ENCODE measurements at regions of chr3 and their contacts with region 1.

Region 1: GRCh38 chr3:44338010-44338827 is at the start of gene TCAIM:
- DNase-seq: peak; percentile 97
- ATAC-seq: peak; percentile 97 to 99 (median 98)
- H3K4me3 ChIP-seq: peak within 1 kb of the TSS; percentile 49 to 84 (median 70)
- H3K27ac ChIP-seq: peak within 1 kb of the TSS; percentile 93 to 98 (median 96)
- H3K4me1 ChIP-seq: peaks cover 0 to 44% (median 30%) of the 10 kb centered on the region in 9 donors
- H3K27me3 ChIP-seq: no peaks in the 10 kb centered on the region
- CTCF ChIP-seq: no peak
- total RNA-seq, gene TCAIM: 22.8 to 43.9 (median 35.3) TPM

Region 2: GRCh38 chr3:44232407-44232806 is 105.8 kb before region 1 on chr3:
- intact Hi-C with region 1: no loop called
- DNase-seq: no peak
- ATAC-seq: no peak
- H3K4me3 ChIP-seq: no peak overlapping the region
- H3K27ac ChIP-seq: no peak overlapping the region
- H3K4me1 ChIP-seq: peaks cover 0 to 11% (median 3%) of the 10 kb centered on the region in 9 donors
- H3K27me3 ChIP-seq: peaks cover 0 to 1% (median 0%) of the 10 kb centered on the region in 7 donors
- CTCF ChIP-seq: no peak

Region 3: DNA sequence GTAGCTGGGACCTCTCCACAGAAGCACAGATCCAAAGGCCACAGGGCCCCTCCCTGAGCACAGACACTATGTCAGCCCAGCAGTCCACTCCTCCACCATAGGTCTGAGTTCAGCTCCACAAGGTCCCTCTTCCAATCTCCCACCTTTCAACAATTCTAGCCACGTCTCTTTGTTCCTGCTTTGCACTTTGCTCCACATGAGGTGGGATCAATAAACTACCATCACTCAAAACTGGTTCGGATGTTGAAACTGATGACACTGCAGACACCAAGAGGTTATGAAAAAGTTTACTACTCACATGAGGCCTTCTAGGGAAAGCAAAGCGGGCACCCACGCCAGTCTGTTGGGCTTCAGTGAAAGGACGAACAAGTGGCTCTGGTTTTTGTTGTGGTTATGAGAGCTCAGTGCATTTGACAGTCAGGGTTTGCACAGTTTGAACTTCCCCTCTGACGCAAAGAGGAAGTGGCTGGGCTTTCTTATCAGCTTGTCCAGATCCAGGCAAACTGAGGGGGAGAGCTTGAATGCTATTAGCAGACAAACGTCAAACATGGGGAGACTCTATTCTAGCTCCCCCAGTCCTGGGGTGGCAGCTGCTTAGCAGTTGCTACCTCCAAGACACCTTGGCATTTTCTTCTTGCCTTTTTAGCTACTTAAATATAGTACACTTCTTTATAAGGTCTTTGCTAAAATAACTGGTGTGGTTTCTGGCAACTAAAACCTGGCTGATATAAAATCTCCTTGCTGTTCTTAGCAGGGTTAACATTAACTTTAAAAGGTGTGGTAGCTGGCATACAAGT is 101.5 kb after region 1 on chr3:
- intact Hi-C with region 1: loop called in 5 of 10 experiments (anchors 2 to 5 kb)
- DNase-seq: peak; percentile 51 to 91
- ATAC-seq: peak; percentile 91 to 98 (median 96)
- H3K4me3 ChIP-seq: peak overlapping the region in 9 of 10 donors; percentile 15 to 50 (median 36)
- H3K27ac ChIP-seq: peak overlapping the region; percentile 84 to 98 (median 92)
- H3K4me1 ChIP-seq: peaks cover 0 to 49% (median 27%) of the 10 kb centered on the region in 9 donors
- H3K27me3 ChIP-seq: no peaks in the 10 kb centered on the region
- CTCF ChIP-seq: no peak

Region 4: DNA sequence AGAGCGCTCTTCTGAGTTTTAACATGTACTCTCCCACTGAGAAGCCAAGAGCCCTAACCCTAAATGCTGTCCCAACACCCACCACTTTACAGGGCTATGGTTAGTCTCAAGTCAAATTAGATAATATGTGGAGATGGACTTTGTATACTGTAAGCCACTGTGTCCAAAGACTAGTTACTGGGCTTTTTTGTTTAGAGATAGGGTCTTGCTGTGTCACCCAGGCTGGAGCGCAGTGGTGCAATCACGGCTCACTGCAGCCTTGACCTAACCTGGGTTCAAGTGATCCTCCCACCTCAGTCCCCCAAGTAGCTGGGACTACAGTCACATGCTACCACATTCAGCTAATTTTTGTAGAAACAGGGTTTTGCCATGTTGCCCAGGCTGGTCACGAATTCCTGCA is 116.0 kb after region 1 on chr3:
- intact Hi-C with region 1: no loop called
- DNase-seq: no peak
- ATAC-seq: no peak
- H3K4me3 ChIP-seq: no peak overlapping the region
- H3K27ac ChIP-seq: no peak overlapping the region
- H3K4me1 ChIP-seq: no peaks in the 10 kb centered on the region
- H3K27me3 ChIP-seq: no peaks in the 10 kb centered on the region
- CTCF ChIP-seq: no peak

Region 5: GRCh38 chr3:44510000-44510368 is 171.8 kb after region 1 on chr3:
- intact Hi-C with region 1: loop called in 1 of 10 experiments (anchors 10 kb)
- DNase-seq: no peak
- ATAC-seq: no peak
- H3K4me3 ChIP-seq: peak overlapping the region; percentile 73 to 98 (median 87)
- H3K27ac ChIP-seq: peak overlapping the region; percentile 41 to 96 (median 92)
- H3K4me1 ChIP-seq: peaks cover 4 to 23% (median 18%) of the 10 kb centered on the region in 9 donors
- H3K27me3 ChIP-seq: no peaks in the 10 kb centered on the region
- CTCF ChIP-seq: no peak

Measured in heart right ventricle (tissue), 16 donors.